ENCODE measurements at regions of chr22 and their contacts with region 1.

Region 1: DNA sequence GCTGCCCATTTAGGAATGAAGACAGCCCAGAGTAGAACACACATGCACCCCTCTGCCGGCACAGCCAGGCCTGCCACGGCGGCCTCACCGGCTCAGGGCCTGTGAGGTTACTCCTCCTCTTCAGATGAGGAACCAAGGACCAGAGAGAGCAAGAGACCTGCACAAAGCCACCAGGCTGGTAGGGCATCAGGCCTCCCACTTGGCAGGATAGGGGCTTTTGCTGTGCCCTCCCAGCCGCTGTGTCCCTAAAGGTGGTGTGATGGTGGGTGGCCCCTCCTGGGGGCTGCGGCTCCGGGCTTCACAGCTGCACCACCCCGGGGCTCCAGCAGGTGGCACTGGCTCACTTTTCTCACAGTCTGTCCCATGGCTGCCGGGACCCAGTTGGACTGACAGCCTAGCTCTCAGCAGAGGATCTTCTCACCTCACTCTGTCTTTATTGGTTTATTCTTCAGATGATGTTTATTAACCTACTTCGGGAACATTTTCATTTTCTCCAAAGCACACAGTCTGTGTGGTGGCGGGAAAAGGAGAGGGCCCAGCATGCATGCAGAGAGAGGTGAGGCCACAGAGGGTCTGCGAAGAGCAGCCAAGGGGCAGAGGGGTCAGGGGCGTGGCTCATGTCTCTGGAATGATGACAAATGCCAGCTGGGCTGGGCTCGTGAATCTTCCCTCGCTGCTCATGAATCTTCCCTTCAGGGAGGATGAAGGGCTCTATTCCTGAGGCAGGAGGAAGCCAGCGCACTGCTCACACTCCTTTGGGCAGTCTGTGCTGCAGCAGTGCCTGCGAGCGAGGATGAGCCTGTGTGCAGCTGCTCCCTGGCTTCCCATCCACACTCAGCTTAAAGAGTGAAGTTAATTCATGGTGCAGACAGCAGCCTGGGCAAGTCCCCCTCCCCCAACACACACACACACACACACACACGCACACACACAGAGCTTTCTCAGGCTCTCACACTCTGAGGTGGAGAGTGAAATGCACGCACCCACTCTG is 101.1 kb upstream of the PITPNB start:
- DNase-seq: peak; percentile 52
- H3K4me3 ChIP-seq: no peak overlapping the region
- H3K27ac ChIP-seq: no peak overlapping the region
- H3K4me1 ChIP-seq: peaks cover 9% of the 10 kb centered on the region
- H3K27me3 ChIP-seq: no peaks in the 10 kb centered on the region
- CTCF ChIP-seq: peak; percentile 95 to 98
- POLR2A ChIP-seq: no peak

Region 2: GRCh38 chr22:28034760-28035401 is 14.7 kb after region 1 on chr22:
- CTCF ChIA-PET with region 1: interaction called, 41 read pairs
- POLR2A ChIA-PET with region 1: no interaction called
- dilution Hi-C with region 1: no loop called
- intact Hi-C with region 1: no loop called
- DNase-seq: peak; percentile 86
- H3K4me3 ChIP-seq: no peak overlapping the region
- H3K27ac ChIP-seq: peak overlapping the region; percentile 0
- H3K4me1 ChIP-seq: peaks cover 41% of the 10 kb centered on the region
- H3K27me3 ChIP-seq: no peaks in the 10 kb centered on the region
- CTCF ChIP-seq: no peak
- POLR2A ChIP-seq: no peak

Region 3: GRCh38 chr22:28594797-28595462 is 574.8 kb after region 1 on chr22:
- CTCF ChIA-PET with region 1: interaction called, 46 read pairs
- POLR2A ChIA-PET with region 1: no interaction called
- dilution Hi-C with region 1: no loop called
- intact Hi-C with region 1: loop called (anchors 1 kb)
- DNase-seq: peak; percentile 69
- H3K4me3 ChIP-seq: no peak overlapping the region
- H3K27ac ChIP-seq: no peak overlapping the region
- H3K4me1 ChIP-seq: peaks cover 4% of the 10 kb centered on the region
- H3K27me3 ChIP-seq: no peaks in the 10 kb centered on the region
- CTCF ChIP-seq: peak; percentile 46 to 53
- POLR2A ChIP-seq: no peak

Measured in endothelial cell of umbilical vein (primary cell).